ENCODE measurements at regions of chr6 and their contacts with region 1.

Region 1: DNA sequence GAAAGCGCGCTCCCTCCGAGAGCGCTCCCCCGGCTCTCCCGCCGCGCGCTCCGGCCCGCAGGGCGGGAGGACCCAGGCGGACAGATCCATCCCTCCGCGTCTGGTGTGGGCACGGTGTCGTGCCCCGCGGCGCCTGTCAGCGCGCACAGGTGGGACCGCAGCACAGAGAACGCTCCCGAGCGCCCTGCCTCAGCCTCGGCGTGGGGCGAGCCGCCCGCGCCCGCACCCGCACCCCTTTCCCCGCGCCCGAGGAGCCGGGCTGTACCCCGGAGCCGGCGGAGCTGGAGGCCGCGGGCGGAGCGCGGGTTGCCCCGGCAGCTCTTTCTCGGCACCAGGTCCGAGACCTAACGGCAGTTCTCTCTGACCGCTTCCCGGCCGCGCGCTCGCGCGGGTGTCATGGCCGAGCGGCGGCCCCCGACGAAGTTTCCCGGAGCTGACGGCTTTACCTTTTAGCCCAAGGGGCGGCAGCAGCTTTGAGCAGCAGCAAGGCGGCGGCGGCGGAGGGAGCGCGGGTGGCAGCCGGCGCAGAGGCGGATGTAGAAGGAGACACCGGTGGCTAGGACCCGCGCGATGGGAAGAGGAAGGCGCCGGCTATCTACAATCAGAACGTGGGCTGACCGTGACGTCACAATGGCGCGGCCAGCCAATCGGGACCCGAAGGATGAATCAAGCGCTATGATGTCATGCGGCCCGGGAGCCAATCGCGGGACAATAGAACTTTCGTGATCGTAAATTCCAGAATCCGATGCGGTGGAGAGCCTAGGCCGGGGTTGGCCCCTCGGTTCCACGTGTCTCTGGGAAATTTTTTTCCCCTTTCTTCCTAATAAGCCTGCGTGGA is at the start of gene ELOVL5:
- DNase-seq: peak; percentile 99
- ATAC-seq: peak; percentile 80
- H3K4me3 Mint-ChIP-seq: peak within 1 kb of the TSS; percentile 96
- H3K27ac Mint-ChIP-seq: peak within 1 kb of the TSS; percentile 93
- H3K4me1 Mint-ChIP-seq: peaks cover 41% of the 10 kb centered on the region
- H3K27me3 Mint-ChIP-seq: no peaks in the 10 kb centered on the region
- CTCF ChIP-seq: no peak
- total RNA-seq, gene ELOVL5: 88.3 to 92.7 TPM

Region 2: GRCh38 chr6:52454556-52454955 is 894.0 kb before region 1 on chr6:
- CTCF ChIA-PET with region 1: no interaction called
- POLR2A ChIA-PET with region 1: no interaction called
- intact Hi-C with region 1: no loop called
- DNase-seq: no peak
- ATAC-seq: no peak
- H3K4me3 Mint-ChIP-seq: no peak overlapping the region
- H3K27ac Mint-ChIP-seq: no peak overlapping the region
- H3K4me1 Mint-ChIP-seq: no peaks in the 10 kb centered on the region
- H3K27me3 Mint-ChIP-seq: no peaks in the 10 kb centered on the region
- CTCF ChIP-seq: no peak

Region 3: GRCh38 chr6:53313784-53314400 is 34.7 kb before region 1 on chr6:
- CTCF ChIA-PET with region 1: interaction called, 5 read pairs
- POLR2A ChIA-PET with region 1: interaction called, 5 read pairs
- intact Hi-C with region 1: loop called (anchors 5 kb)
- DNase-seq: no peak
- ATAC-seq: no peak
- H3K4me3 Mint-ChIP-seq: no peak overlapping the region
- H3K27ac Mint-ChIP-seq: no peak overlapping the region
- H3K4me1 Mint-ChIP-seq: peaks cover 79% of the 10 kb centered on the region
- H3K27me3 Mint-ChIP-seq: no peaks in the 10 kb centered on the region
- CTCF ChIP-seq: no peak

Region 4: GRCh38 chr6:53335208-53335994 is 13.2 kb before region 1 on chr6:
- CTCF ChIA-PET with region 1: interaction called, 18 read pairs
- POLR2A ChIA-PET with region 1: interaction called, 51 read pairs
- intact Hi-C with region 1: no loop called
- DNase-seq: peak; percentile 87
- ATAC-seq: peak; percentile 90
- H3K4me3 Mint-ChIP-seq: peak overlapping the region; percentile 75
- H3K27ac Mint-ChIP-seq: peak overlapping the region; percentile 99
- H3K4me1 Mint-ChIP-seq: peaks cover 86% of the 10 kb centered on the region
- H3K27me3 Mint-ChIP-seq: no peaks in the 10 kb centered on the region
- CTCF ChIP-seq: no peak

Region 5: GRCh38 chr6:53359072-53359842 is 10.7 kb after region 1 on chr6:
- CTCF ChIA-PET with region 1: interaction called, 6 read pairs
- POLR2A ChIA-PET with region 1: interaction called, 21 read pairs
- intact Hi-C with region 1: no loop called
- DNase-seq: peak; percentile 92
- ATAC-seq: peak; percentile 95
- H3K4me3 Mint-ChIP-seq: peak overlapping the region; percentile 91
- H3K27ac Mint-ChIP-seq: peak overlapping the region; percentile 99
- H3K4me1 Mint-ChIP-seq: peaks cover 45% of the 10 kb centered on the region
- H3K27me3 Mint-ChIP-seq: no peaks in the 10 kb centered on the region
- CTCF ChIP-seq: no peak

Measured in activated CD8-positive, alpha-beta T cell treated with anti-CD3 and anti-CD28 coated beads for 36 hours (primary cell).